ENCODE measurements at regions of chr2 and their contacts with region 1.

Region 1: DNA sequence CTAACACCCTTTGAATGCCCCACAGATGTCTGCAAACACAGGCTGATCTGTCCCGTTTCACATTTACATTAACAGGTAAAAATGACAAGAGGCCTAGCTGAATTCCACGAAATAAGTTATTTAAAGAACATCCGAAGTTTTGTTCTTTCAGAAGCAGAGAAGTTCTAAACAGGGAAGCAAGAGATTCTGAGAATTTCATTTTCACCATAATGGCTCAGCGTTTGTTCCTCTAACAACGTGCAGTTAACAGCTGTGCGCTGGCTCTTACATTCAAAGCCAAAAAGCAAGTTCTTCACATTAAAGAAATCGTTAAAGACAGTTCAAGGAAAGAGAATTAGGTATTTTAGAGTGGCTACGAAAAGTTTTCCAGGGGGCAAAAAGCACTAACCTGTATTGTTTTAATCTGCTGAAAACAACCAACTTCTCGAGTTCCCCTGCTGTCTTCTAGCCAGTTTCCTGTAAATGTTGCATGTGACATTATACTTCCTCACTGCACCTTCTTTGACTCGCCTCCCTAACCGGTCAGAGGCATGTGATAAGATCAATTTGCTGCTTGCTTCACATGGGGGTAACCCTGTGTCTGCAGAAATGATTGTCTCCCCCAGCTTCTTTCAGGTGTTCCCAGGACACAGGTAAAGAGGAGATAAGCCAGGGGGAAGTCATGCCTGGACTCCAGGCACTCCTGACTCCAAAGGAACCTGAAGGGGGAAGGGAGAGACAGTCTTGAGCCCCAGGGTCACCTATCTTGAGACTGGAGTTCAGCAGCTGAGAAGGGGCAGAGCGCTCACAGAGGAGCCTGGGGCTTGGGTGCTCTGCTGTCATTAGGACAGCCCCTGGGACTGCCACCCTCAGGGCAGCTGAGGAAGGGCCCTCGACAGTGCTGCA is 36.8 kb upstream of the WIPF1 start:
- DNase-seq: peak; percentile 73
- H3K4me3 Mint-ChIP-seq: peak overlapping the region; percentile 78
- H3K27ac Mint-ChIP-seq: peak overlapping the region; percentile 95
- H3K4me1 Mint-ChIP-seq: peaks cover 56% of the 10 kb centered on the region
- H3K27me3 Mint-ChIP-seq: no peaks in the 10 kb centered on the region

Region 2: GRCh38 chr2:174568425-174568824 is 65.9 kb before region 1 on chr2:
- CTCF ChIA-PET with region 1: interaction called, 4 read pairs
- POLR2A ChIA-PET with region 1: interaction called, 4 read pairs
- intact Hi-C with region 1: loop called (anchors 2 kb)
- DNase-seq: no peak
- H3K4me3 Mint-ChIP-seq: no peak overlapping the region
- H3K27ac Mint-ChIP-seq: peak overlapping the region; percentile 76
- H3K4me1 Mint-ChIP-seq: peaks cover 65% of the 10 kb centered on the region
- H3K27me3 Mint-ChIP-seq: no peaks in the 10 kb centered on the region

Region 3: GRCh38 chr2:174593574-174594203 is 40.7 kb before region 1 on chr2:
- CTCF ChIA-PET with region 1: interaction called, 45 read pairs
- POLR2A ChIA-PET with region 1: interaction called, 126 read pairs
- intact Hi-C with region 1: loop called (anchors 1 kb)
- DNase-seq: peak; percentile 79
- H3K4me3 Mint-ChIP-seq: peak overlapping the region; percentile 81
- H3K27ac Mint-ChIP-seq: peak overlapping the region; percentile 98
- H3K4me1 Mint-ChIP-seq: peaks cover 71% of the 10 kb centered on the region
- H3K27me3 Mint-ChIP-seq: no peaks in the 10 kb centered on the region

Region 4: DNA sequence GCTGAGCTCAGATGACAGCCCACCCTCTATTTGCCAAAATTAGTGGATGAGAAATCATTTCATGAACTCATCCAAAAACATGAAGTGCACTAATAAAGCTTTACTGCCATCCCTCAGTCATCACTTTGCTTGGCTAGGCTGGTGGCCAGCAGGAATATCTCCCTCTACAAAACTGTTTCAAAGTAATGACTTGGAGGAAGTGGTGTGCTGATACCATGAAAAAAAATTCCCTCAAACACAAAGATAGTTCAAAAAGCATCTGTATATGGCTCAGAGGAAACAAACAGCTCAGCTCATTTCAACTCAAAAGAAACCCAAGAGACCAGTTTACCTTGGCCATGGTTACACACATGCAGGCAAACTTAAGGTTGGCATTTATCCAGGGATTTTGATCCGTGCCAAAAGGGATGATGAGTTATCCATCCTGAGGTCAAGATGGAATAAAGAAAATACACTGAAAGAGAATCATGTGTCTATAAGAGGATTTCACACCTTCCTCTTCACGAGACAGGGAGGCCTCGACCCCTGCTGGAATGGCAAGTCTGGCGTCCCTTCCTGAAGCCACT is 18.4 kb before region 1 on chr2:
- CTCF ChIA-PET with region 1: interaction called, 37 read pairs
- POLR2A ChIA-PET with region 1: interaction called, 13 read pairs
- intact Hi-C with region 1: loop called (anchors 1 kb)
- DNase-seq: no peak
- H3K4me3 Mint-ChIP-seq: peak overlapping the region; percentile 5
- H3K27ac Mint-ChIP-seq: peak overlapping the region; percentile 85
- H3K4me1 Mint-ChIP-seq: peaks cover 84% of the 10 kb centered on the region
- H3K27me3 Mint-ChIP-seq: no peaks in the 10 kb centered on the region

Region 5: GRCh38 chr2:174659069-174659900 is 24.9 kb after region 1 on chr2:
- CTCF ChIA-PET with region 1: interaction called, 5 read pairs
- POLR2A ChIA-PET with region 1: no interaction called
- intact Hi-C with region 1: loop called (anchors 1 kb)
- DNase-seq: no peak
- H3K4me3 Mint-ChIP-seq: no peak overlapping the region
- H3K27ac Mint-ChIP-seq: peak overlapping the region; percentile 52
- H3K4me1 Mint-ChIP-seq: peaks cover 33% of the 10 kb centered on the region
- H3K27me3 Mint-ChIP-seq: no peaks in the 10 kb centered on the region

Region 6: DNA sequence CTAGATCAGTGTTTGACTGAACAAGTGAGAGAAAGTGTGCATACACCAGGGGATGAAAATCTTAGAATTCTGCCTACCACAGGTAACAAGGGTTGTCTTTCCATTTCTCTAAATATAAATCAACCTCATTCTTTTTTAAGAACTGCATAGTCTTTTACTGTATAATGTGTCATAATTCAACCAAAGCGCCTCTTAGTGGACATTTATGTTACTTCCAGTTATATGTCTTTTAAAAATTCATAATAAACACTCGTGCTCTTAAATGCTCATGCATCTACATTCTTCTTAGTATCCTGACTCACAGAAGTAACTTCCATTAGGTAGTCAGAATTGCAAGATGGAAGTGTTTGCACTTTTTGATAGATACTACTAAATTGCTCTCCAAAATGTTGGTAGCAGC is 53.7 kb after region 1 on chr2:
- CTCF ChIA-PET with region 1: interaction called, 62 read pairs
- POLR2A ChIA-PET with region 1: interaction called, 17 read pairs
- intact Hi-C with region 1: loop called (anchors 1 kb)
- DNase-seq: no peak
- H3K4me3 Mint-ChIP-seq: no peak overlapping the region
- H3K27ac Mint-ChIP-seq: no peak overlapping the region
- H3K4me1 Mint-ChIP-seq: peaks cover 32% of the 10 kb centered on the region
- H3K27me3 Mint-ChIP-seq: no peaks in the 10 kb centered on the region

Measured in activated CD4-positive, alpha-beta memory T cell treated with anti-CD3 and anti-CD28 coated beads for 36 hours (primary cell).